ENCODE measurements at regions of chr3 and their contacts with region 1.

Region 1: DNA sequence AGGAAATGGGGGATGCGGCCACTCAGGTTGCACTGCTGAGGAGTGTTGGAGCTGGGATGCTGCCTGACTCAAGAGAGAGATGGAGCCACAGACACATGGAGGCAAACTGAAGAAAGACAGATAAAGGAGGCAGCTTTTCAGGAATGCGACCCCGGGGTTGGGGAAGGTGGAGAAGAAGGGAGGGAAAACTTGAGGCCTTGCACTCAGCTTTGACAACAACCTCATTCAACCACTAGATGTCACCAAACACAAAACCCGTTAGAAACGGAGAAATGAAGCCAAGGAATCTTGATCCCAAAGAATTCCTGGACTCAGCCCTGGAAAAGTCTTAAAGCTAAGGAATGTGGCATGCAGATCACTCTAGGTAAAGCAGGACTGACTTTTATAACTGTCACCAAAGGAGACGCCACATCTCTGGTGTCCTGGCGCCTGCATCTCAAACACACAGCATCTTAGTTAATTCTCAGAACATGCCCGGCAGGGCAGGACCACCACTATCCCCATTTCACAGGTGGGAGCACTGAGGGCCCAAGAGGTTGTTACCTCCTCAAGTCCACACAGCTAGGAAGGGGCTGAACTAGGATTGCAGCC is 59.6 kb upstream of the LMCD1 start:
- DNase-seq: peak; percentile 76
- H3K4me3 ChIP-seq: no peak overlapping the region
- H3K27ac ChIP-seq: no peak overlapping the region
- H3K4me1 ChIP-seq: peaks cover 30% of the 10 kb centered on the region
- H3K27me3 ChIP-seq: no peaks in the 10 kb centered on the region
- CTCF ChIP-seq: peak; percentile 62 to 75
- POLR2A ChIP-seq: no peak

Region 2: GRCh38 chr3:8400911-8401310 is 41.2 kb before region 1 on chr3:
- CTCF ChIA-PET with region 1: no interaction called
- POLR2A ChIA-PET with region 1: no interaction called
- dilution Hi-C with region 1: no loop called
- intact Hi-C with region 1: no loop called
- DNase-seq: no peak
- H3K4me3 ChIP-seq: no peak overlapping the region
- H3K27ac ChIP-seq: no peak overlapping the region
- H3K4me1 ChIP-seq: no peaks in the 10 kb centered on the region
- H3K27me3 ChIP-seq: no peaks in the 10 kb centered on the region
- CTCF ChIP-seq: no peak
- POLR2A ChIP-seq: no peak

Region 3: GRCh38 chr3:8416965-8417364 is 25.1 kb before region 1 on chr3:
- CTCF ChIA-PET with region 1: interaction called, 12 read pairs
- POLR2A ChIA-PET with region 1: no interaction called
- dilution Hi-C with region 1: no loop called
- intact Hi-C with region 1: loop called (anchors 1 kb)
- DNase-seq: peak; percentile 39
- H3K4me3 ChIP-seq: no peak overlapping the region
- H3K27ac ChIP-seq: no peak overlapping the region
- H3K4me1 ChIP-seq: no peaks in the 10 kb centered on the region
- H3K27me3 ChIP-seq: no peaks in the 10 kb centered on the region
- CTCF ChIP-seq: no peak
- POLR2A ChIP-seq: no peak

Region 4: GRCh38 chr3:8501371-8502131 is 59.5 kb after region 1 on chr3 and contains the start of gene LMCD1:
- CTCF ChIA-PET with region 1: interaction called, 114 read pairs
- POLR2A ChIA-PET with region 1: interaction called, 8 read pairs
- dilution Hi-C with region 1: no loop called
- intact Hi-C with region 1: loop called (anchors 1 kb)
- DNase-seq: peak; percentile 98
- H3K4me3 ChIP-seq: peak within 1 kb of the TSS; percentile 43 to 72 (median 62)
- H3K27ac ChIP-seq: peak within 1 kb of the TSS; percentile 95
- H3K4me1 ChIP-seq: peaks cover 49% of the 10 kb centered on the region
- H3K27me3 ChIP-seq: no peaks in the 10 kb centered on the region
- CTCF ChIP-seq: no peak
- POLR2A ChIP-seq: peak; percentile 43
- total RNA-seq, gene LMCD1: 11.1 and 14.5 TPM in 2 replicates

Region 5: DNA sequence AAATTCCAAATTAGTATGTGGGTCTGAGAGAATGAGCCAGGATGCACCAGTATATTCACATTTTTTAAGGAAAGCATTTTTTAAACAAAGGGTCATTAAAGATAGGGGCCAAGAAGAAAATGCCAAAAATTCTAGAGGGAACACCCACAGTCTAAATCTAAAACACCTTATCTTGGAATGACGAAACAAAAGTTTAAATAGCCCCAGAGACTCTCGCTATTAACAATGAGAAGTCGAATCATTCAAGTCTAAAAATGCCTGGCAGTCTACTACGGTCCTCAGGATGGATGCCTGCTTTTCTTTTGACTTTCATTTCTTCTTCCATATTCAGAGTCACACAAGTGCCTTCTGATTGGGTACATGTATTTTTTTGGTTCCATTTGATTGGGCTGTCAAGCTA is 136.2 kb after region 1 on chr3:
- CTCF ChIA-PET with region 1: interaction called, 8 read pairs
- POLR2A ChIA-PET with region 1: no interaction called
- dilution Hi-C with region 1: no loop called
- intact Hi-C with region 1: loop called (anchors 1 kb)
- DNase-seq: no peak
- H3K4me3 ChIP-seq: no peak overlapping the region
- H3K27ac ChIP-seq: no peak overlapping the region
- H3K4me1 ChIP-seq: no peaks in the 10 kb centered on the region
- H3K27me3 ChIP-seq: no peaks in the 10 kb centered on the region
- CTCF ChIP-seq: no peak
- POLR2A ChIP-seq: no peak

Region 6: DNA sequence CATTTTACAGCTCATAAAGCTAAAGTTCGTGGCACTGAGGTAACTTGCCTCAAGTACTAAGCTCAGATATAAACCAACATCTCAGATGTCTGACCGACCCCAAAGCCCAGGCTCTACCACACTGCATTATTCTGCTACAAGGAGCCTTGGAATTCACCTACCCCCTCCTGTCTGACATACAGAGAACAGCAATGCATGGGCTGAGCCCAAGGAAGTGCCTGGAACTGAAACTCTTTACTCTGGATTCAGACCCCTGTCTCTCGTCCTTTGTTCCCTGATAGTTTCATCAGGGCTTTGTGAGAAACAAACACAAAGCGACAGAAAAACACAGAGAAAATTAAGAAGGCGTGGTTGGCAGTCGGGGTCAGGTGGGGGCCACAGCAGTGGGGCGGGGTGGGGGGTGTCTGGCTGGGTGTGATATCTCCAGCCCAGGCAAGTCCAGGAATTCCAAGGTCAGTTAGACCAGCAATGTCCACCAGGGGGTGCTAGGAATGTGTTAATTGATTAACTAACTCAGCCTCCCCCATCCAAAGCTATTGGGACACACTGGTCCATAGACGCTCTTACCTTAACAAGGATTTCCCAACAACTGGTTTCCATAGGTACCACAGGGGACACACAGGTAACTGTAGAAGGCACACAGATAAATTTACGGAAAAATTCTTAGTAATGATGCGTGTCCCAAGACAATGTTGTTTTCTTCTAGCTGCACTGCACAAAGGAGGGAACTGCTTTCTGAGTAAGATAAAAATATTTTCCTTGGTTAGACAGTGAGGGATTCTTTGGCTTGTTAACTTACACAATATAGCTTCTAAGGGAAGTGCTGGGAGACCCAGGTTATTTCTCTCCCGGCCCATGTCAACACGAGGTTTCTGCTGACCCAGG is 221.4 kb after region 1 on chr3:
- CTCF ChIA-PET with region 1: interaction called, 10 read pairs
- POLR2A ChIA-PET with region 1: no interaction called
- dilution Hi-C with region 1: no loop called
- intact Hi-C with region 1: loop called (anchors 1 kb)
- DNase-seq: peak; percentile 66
- H3K4me3 ChIP-seq: no peak overlapping the region
- H3K27ac ChIP-seq: no peak overlapping the region
- H3K4me1 ChIP-seq: peaks cover 4% of the 10 kb centered on the region
- H3K27me3 ChIP-seq: peaks cover 0 to 8% of the 10 kb centered on the region in 2 experiments
- CTCF ChIP-seq: peak; percentile 52 to 67
- POLR2A ChIP-seq: no peak

Region 7: DNA sequence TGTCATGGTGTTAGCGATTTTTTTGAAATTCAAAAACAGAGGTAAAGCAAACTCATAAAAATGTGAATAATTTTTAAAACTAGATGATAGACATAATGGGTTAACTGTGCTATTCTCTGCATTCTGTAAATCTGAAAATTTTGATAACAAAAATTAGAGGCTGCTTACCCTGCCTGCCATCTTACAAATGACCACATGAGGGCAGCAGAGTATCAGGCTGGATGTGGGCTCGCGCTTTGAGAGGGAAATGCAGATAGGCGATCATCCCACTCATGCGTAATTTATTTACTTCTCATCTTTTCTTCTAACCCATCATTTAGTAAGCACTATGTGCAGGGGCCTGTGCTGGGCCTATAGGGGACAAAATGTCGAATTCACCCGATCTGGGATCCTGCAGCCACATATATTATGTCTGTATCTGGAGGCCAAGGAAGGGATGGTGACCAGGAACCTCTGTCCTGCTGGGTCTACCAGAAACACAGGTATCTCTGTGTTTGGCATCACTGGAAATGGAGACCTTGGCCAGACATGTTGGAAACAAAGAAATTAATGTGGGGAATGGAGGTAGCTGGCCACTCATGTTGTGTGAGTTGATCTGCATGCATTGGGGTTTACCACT is 529.0 kb after region 1 on chr3:
- CTCF ChIA-PET with region 1: no interaction called
- POLR2A ChIA-PET with region 1: no interaction called
- dilution Hi-C with region 1: no loop called
- intact Hi-C with region 1: no loop called
- DNase-seq: peak; percentile 60
- H3K4me3 ChIP-seq: no peak overlapping the region
- H3K27ac ChIP-seq: no peak overlapping the region
- H3K4me1 ChIP-seq: no peaks in the 10 kb centered on the region
- H3K27me3 ChIP-seq: peaks cover 2 to 8% of the 10 kb centered on the region in 2 experiments
- CTCF ChIP-seq: peak; percentile 82 to 89
- POLR2A ChIP-seq: no peak